ENCODE measurements at regions of chr15 and their contacts with region 1.

Region 1: GRCh38 chr15:41416742-41417406 is at the start of gene RTF1:
- DNase-seq: peak; percentile 99
- total RNA-seq, gene RTF1: 26.8 TPM

Region 2: GRCh38 chr15:41401904-41402267 is 15.0 kb before region 1 on chr15:
- intact Hi-C with region 1: loop called (anchors 1 kb)
- DNase-seq: no peak